ENCODE measurements at regions of chr17 and their contacts with region 1.

Region 1: GRCh38 chr17:18626152-18626870 is 17.9 kb downstream of the TBC1D28 start:
- DNase-seq: no peak
- ATAC-seq: no peak
- H3K4me3 ChIP-seq: no peak overlapping the region
- H3K27ac ChIP-seq: no peak overlapping the region
- H3K4me1 ChIP-seq: no peaks in the 10 kb centered on the region; a peak in 1 of 5 replicates
- H3K27me3 ChIP-seq: no peaks in the 10 kb centered on the region
- CTCF ChIP-seq: no peak
- EP300 ChIP-seq: no peak
- POLR2A ChIP-seq: no peak
- RAD21 ChIP-seq: no peak

Region 2: GRCh38 chr17:17269926-17270773 is 1356.2 kb before region 1 on chr17:
- CTCF ChIA-PET with region 1: no interaction called
- POLR2A ChIA-PET with region 1: no interaction called
- in situ Hi-C with region 1: no loop called
- intact Hi-C with region 1: no loop called
- DNase-seq: no peak
- ATAC-seq: no peak; the same call in 2 of the 3 replicates
- H3K4me3 ChIP-seq: no peak overlapping the region
- H3K27ac ChIP-seq: no peak overlapping the region
- H3K4me1 ChIP-seq: no peaks in the 10 kb centered on the region
- H3K27me3 ChIP-seq: no peaks in the 10 kb centered on the region
- CTCF ChIP-seq: peak; percentile 25 to 37 (median 36); a peak in 4 of 6 replicates
- EP300 ChIP-seq: no peak
- POLR2A ChIP-seq: no peak
- RAD21 ChIP-seq: no peak

Region 3: DNA sequence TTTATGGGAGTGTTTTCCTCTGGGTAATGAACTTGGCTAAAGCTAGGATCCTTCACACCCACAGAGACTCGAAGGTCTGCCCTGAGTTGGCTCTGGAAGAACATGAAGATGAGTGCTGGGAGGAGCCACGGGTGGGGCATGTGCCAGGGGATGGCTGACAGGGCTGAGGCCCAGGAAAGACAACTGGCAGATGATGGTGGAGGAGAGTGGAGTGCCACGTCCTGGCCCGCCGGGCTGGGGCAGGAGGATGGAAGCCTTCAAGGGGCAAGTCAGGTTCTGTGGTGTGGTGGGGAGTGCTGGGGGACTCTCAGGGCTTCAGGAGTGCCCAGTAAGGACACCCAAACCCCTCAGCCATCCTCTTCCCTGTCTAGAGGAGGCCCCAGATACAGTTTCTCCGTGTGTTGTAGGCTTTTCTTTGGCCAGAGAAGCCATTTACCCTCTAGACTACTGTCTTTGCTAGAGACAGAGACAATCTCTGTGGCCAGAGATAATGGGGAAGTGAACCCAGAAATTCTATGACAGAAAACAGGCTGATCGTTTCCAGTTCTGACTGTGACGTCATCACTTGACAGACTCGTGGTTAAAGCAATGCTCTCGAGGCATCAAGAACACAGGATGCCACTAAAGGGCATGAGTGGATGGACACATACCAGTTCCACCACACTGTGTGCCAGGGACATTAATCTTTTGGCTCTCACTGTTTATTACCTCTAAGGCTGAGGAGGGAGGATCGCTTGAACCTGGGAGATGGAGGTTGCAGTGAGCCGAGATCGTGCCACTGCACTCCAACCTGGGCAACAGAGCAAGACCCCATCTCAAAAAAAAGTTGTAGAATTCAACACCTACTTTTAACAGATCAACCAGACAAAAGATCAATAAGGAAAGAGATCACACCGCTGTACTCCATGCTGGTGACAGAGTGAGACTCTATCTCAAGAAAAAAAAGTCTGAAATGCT is 307.1 kb after region 1 on chr17:
- CTCF ChIA-PET with region 1: no interaction called
- POLR2A ChIA-PET with region 1: no interaction called
- in situ Hi-C with region 1: no loop called
- intact Hi-C with region 1: loop called (anchors 10 kb)
- DNase-seq: no peak
- ATAC-seq: no peak
- H3K4me3 ChIP-seq: no peak overlapping the region
- H3K27ac ChIP-seq: no peak overlapping the region
- H3K4me1 ChIP-seq: peaks cover 0 to 3% of the 10 kb centered on the region in 2 experiments; a peak in 1 of 5 replicates
- H3K27me3 ChIP-seq: no peaks in the 10 kb centered on the region
- CTCF ChIP-seq: no peak
- EP300 ChIP-seq: no peak
- POLR2A ChIP-seq: no peak
- RAD21 ChIP-seq: no peak